ENCODE measurements at regions of chr10 and their contacts with region 1.

Region 1: DNA sequence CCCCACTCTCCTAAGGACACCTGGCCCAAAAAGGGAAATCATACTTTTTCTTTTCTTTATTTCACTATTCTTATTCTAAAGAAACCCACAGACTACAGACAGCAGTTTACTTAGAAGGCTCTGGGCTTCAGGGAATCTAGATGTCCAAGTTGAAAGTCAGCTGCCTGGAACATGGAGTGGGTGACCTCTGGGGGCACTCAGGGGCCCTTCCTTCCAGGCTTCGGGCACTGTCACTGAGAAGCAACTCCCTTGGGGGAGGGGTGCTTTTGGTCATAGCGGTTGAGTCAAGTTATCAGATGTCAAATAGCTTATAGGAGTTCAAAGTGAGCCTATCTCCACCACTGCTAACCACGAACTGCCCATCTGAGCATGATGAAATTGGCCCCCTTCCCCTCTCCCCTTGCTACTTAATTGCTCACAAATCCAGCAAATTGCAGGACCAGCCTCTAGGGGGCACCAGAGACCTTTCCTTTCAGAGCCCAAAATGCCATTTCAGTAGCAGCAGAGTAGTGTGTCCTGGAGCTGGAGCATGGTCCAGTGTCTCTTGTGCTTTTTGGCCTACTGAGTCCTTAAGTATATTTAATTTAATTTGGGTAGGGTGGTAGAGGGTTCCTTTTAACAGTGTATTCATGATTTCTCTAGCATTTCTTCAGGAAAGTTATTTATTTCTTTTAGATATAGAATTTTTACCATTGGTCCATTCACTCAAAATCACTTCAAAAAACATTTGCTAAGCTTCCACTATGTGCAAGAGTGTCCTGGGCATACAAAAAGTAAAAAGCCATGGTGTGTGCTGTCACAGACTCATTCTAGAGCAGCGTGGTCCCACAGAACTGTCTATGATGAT is 463.8 kb downstream of the KCNMA1 start:
- DNase-seq: peak; percentile 77 to 80
- ATAC-seq: peak; percentile 90 to 95
- H3K4me3 ChIP-seq: no peak overlapping the region
- H3K27ac ChIP-seq: peak overlapping the region in 1 of 2 experiments; percentile 52; a peak in 2 of 6 replicates
- H3K4me1 ChIP-seq: peaks cover 8% of the 10 kb centered on the region
- CTCF ChIP-seq: peak; percentile 97
- EP300 ChIP-seq: no peak
- POLR2A ChIP-seq: no peak
- RAD21 ChIP-seq: peak; percentile 96

Region 2: GRCh38 chr10:77185696-77186095 is 11.9 kb after region 1 on chr10:
- CTCF ChIA-PET with region 1: interaction called, 47 read pairs
- POLR2A ChIA-PET with region 1: no interaction called
- DNase-seq: no peak
- ATAC-seq: peak in 1 of 2 experiments; percentile 25; a peak in 1 of 6 replicates
- H3K4me3 ChIP-seq: no peak overlapping the region
- H3K27ac ChIP-seq: no peak overlapping the region
- H3K4me1 ChIP-seq: no peaks in the 10 kb centered on the region
- CTCF ChIP-seq: no peak
- EP300 ChIP-seq: no peak
- POLR2A ChIP-seq: no peak
- RAD21 ChIP-seq: no peak

Region 3: GRCh38 chr10:77236700-77237099 is 62.9 kb after region 1 on chr10:
- CTCF ChIA-PET with region 1: interaction called, 14 read pairs
- POLR2A ChIA-PET with region 1: no interaction called
- DNase-seq: no peak
- ATAC-seq: no peak
- H3K4me3 ChIP-seq: no peak overlapping the region
- H3K27ac ChIP-seq: no peak overlapping the region
- H3K4me1 ChIP-seq: peaks cover 4% of the 10 kb centered on the region; the same call in 1 of the 3 replicates
- CTCF ChIP-seq: no peak
- EP300 ChIP-seq: no peak
- POLR2A ChIP-seq: no peak
- RAD21 ChIP-seq: no peak

Region 4: GRCh38 chr10:77251297-77252013 is 77.6 kb after region 1 on chr10:
- CTCF ChIA-PET with region 1: interaction called, 49 read pairs
- POLR2A ChIA-PET with region 1: no interaction called
- DNase-seq: peak; percentile 63 to 64
- ATAC-seq: peak; percentile 91 to 95
- H3K4me3 ChIP-seq: no peak overlapping the region
- H3K27ac ChIP-seq: peak overlapping the region; percentile 18 to 51; a peak in 3 of 6 replicates
- H3K4me1 ChIP-seq: peaks cover 22% of the 10 kb centered on the region
- CTCF ChIP-seq: peak; percentile 83
- EP300 ChIP-seq: no peak
- POLR2A ChIP-seq: no peak
- RAD21 ChIP-seq: peak; percentile 92 to 94

Region 5: DNA sequence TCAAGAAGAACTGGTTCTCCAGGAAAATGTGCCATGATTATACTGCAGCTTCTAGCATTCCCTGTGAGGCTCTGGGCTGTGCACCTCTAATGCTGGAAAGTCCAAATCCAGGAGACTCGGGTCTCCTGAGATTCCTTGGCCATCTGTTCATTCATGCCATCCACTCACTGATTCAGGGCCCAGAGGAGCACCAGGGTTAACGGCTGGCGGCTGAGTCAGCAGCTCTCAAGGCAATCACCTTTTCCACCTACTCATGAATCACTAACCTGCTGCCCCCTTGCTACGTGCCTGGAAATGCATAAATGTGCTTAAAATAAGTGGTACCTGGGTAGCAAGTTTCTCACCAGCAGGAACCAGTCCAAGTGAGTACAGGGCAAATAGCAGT is 331.0 kb after region 1 on chr10:
- CTCF ChIA-PET with region 1: interaction called, 10 read pairs
- POLR2A ChIA-PET with region 1: no interaction called
- DNase-seq: peak; percentile 49 to 59
- ATAC-seq: peak; percentile 49 to 69; a peak in 5 of 6 replicates
- H3K4me3 ChIP-seq: no peak overlapping the region
- H3K27ac ChIP-seq: peak overlapping the region; percentile 69 to 84
- H3K4me1 ChIP-seq: peaks cover 65% of the 10 kb centered on the region
- CTCF ChIP-seq: peak; percentile 22; the same call in 2 of the 3 replicates
- EP300 ChIP-seq: peak in 1 of 2 experiments; percentile 23; a peak in 1 of 5 replicates
- POLR2A ChIP-seq: no peak
- RAD21 ChIP-seq: peak in 1 of 2 experiments; percentile 36; a peak in 3 of 5 replicates

Region 6: DNA sequence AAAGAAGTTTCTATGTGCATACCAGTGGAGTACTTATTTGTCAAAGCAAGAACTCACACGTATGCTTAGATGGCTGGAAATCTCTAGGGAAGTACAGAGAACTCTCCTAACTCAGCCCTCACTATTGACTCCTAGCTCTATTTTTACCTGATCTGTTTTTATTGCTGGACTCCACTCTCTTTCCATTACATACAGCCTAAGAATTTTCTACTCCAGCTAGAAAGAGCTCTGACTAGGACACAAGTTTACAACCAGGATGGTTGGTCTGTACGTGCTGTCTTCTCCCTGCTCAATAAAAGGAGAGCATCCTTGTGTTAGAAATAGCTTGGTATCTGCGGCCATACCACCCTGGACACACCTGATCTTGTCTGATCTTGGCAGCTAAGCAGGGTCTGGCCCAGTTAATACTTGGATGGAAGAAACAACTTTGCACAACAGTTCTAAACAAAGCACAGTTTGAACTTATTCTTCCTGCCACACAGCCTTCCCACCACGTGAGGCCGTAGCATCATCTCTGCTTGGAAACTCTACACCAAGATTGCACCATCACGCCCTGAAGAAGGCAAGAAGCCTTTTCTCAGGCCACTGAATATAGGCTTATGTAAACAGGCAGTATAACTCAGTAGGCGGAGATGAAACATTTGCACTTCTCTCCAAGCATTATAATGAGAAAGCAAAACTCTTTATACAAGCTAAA is 413.0 kb after region 1 on chr10:
- CTCF ChIA-PET with region 1: interaction called, 14 read pairs
- POLR2A ChIA-PET with region 1: no interaction called
- DNase-seq: peak in 1 of 2 experiments; percentile 71
- ATAC-seq: peak; percentile 66 to 76
- H3K4me3 ChIP-seq: no peak overlapping the region
- H3K27ac ChIP-seq: peak overlapping the region; percentile 76 to 82
- H3K4me1 ChIP-seq: peaks cover 56% of the 10 kb centered on the region
- CTCF ChIP-seq: no peak
- EP300 ChIP-seq: no peak
- POLR2A ChIP-seq: no peak
- RAD21 ChIP-seq: no peak

Region 7: GRCh38 chr10:77710759-77711682 is 537.2 kb after region 1 on chr10:
- CTCF ChIA-PET with region 1: interaction called, 225 read pairs
- POLR2A ChIA-PET with region 1: interaction called, 3 read pairs
- DNase-seq: peak; percentile 48 to 62
- ATAC-seq: peak; percentile 95 to 99
- H3K4me3 ChIP-seq: peak overlapping the region; percentile 31; the same call in 2 of the 3 replicates
- H3K27ac ChIP-seq: peak overlapping the region; percentile 40 to 79; a peak in 5 of 6 replicates
- H3K4me1 ChIP-seq: no peaks in the 10 kb centered on the region
- CTCF ChIP-seq: peak; percentile 86
- EP300 ChIP-seq: no peak
- POLR2A ChIP-seq: no peak
- RAD21 ChIP-seq: peak; percentile 82 to 84

Measured in A549 (cell line).